Activated CD4-positive, alpha-beta T cell treated with anti-CD3 and anti-CD28 coated beads, Interleukin-2, amount 10 ng/mL, durations not matched to agents 24 days and 14 days (primary cell): ENCODE measurements at regions of chr1 and their contacts with region 1.

Region 1: DNA sequence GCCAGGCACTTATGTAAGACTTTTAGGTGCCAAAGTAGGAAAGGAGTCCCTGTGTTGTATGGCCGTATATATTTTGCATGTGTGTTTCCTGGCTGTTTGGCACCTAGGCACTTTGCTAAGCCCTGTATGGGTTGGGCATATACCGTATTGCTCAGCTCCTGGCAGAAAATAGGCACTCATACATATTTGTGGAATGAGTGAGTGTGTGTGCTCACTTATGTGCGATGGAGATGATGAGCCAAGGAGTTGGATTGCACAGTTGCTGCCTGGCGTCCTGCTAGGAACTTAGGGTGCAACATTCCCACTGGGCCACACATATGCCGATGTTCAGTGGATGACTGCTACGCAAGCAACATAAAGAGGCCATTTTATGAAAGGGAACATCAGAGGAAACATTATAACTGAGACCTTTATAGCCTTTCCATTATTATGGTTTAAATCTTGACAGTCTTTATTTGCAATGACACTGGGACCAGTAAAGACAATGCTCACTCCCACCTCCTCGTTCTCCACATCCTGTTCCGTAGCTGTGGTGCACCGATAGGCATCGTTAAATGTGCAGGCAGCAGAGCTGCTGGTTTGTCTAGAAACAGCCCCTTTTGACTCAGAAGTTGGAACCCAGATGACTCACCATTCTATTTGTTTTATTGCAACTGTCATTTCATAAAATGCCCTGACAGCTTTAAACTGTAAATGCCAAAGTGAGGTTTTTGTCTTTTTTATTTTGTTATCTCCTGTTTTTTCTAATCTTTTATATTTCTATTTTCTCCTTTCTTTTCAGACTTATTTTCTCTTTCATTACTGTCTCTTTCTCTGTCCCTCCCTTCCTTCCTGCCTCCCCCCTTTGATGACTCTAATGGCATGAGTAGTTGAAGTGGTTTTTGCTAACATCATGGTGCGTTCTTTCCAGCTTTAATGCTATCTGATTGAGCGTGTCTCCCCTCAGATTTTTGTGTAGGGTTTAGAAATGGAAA is 36.1 kb downstream of the PEX14 start:
- DNase-seq: peak; percentile 93
- H3K4me3 Mint-ChIP-seq: peak overlapping the region; percentile 59
- H3K27ac Mint-ChIP-seq: peak overlapping the region; percentile 87
- H3K4me1 Mint-ChIP-seq: peaks cover 59% of the 10 kb centered on the region
- H3K27me3 Mint-ChIP-seq: no peaks in the 10 kb centered on the region

Region 2: GRCh38 chr1:10635085-10635896 is 124.5 kb after region 1 on chr1:
- intact Hi-C with region 1: loop called (anchors 10 kb)
- DNase-seq: no peak
- H3K4me3 Mint-ChIP-seq: no peak overlapping the region
- H3K27ac Mint-ChIP-seq: no peak overlapping the region
- H3K4me1 Mint-ChIP-seq: no peaks in the 10 kb centered on the region
- H3K27me3 Mint-ChIP-seq: peaks cover 8% of the 10 kb centered on the region

Region 3: GRCh38 chr1:10694633-10695627 is 184.1 kb after region 1 on chr1:
- intact Hi-C with region 1: loop called (anchors 1 kb)
- DNase-seq: peak; percentile 93
- H3K4me3 Mint-ChIP-seq: peak overlapping the region; percentile 84
- H3K27ac Mint-ChIP-seq: peak overlapping the region; percentile 77
- H3K4me1 Mint-ChIP-seq: peaks cover 26% of the 10 kb centered on the region
- H3K27me3 Mint-ChIP-seq: peaks cover 23% of the 10 kb centered on the region

Region 4: DNA sequence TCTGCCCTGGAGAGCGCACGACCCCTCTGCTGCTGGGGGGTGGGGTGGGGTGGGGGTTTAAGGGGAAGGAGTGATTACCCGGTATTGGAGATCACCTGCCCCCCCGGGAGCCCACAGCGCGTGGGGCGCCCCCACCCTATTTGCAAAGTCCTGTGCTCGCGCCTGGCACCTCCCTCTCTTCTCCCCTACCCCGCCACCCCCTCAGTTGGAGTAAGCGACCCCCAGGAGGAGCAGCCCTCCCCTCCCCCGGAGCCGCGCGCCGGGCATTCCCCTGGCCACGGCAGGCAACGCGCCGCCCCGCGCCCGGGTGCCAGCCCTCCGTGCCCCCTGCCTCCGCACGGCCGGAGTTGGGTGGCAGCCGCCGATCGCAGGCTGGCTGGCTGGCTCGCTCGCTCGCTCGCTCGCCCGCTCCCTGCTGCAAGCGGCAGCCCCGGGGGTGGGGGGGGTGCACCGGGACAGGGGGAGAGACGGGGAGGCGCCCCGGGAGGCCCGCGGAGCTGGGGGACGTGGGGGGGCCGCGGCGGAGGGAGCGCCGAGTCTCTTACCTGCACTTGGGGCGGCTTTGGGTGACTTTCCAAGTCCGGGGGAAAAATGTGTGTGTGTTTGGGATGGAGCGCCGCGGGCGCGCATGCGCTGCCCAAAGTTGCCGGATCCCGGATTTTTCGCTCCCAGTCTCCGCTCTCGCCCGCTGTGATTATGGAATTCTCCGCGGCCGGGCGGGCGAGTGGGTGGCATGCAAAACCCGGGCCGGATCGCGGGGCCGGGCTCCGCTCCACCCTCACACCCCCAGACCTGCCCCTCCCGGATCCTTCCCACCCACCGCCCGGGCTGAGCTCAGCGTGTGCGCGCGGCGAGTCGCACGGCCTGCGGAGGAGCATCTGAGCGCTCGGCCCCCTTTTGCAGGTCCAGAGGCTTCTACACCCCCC is 285.5 kb after region 1 on chr1 and contains the start of gene CASZ1:
- intact Hi-C with region 1: loop called (anchors 10 kb)
- DNase-seq: no peak
- H3K4me3 Mint-ChIP-seq: peak within 1 kb of the TSS; percentile 85
- H3K27ac Mint-ChIP-seq: no peak within 1 kb of the TSS
- H3K4me1 Mint-ChIP-seq: peaks cover 8% of the 10 kb centered on the region
- H3K27me3 Mint-ChIP-seq: peaks cover 65% of the 10 kb centered on the region
- total RNA-seq, gene CASZ1: 6.9 and 7.5 TPM in 2 replicates

Region 5: DNA sequence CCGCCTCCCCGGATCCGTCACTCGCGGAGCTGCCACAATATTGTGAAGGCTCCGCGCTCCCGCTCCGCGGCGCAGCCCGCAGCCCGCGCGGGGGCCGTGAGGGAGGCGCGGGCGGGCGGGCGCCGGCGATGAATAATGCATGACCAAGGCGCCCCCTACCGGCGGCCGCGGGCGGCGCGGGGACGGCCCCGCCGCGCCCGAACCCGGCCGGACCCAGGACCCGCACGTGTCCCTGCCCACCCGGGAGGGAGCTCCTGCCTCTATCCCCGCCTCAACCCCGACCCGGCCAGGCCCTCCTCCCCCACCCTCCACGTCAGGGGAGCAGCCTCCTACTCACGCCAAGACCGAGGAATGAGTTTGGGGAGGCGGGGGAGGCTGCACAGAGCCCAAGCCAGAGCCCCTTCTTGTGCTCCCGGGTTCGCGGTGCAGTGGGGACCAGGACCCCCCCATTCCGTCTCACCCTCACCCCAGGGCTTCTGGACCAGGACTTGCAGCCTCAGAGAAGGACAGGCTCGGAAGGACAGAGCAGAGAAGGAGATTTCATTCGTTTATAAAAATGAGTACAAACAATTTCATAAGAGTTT is 356.4 kb after region 1 on chr1:
- intact Hi-C with region 1: loop called (anchors 2 kb)
- DNase-seq: peak; percentile 90
- H3K4me3 Mint-ChIP-seq: peak overlapping the region; percentile 41
- H3K27ac Mint-ChIP-seq: no peak overlapping the region
- H3K4me1 Mint-ChIP-seq: peaks cover 14% of the 10 kb centered on the region
- H3K27me3 Mint-ChIP-seq: peaks cover 65% of the 10 kb centered on the region

Region 6: GRCh38 chr1:10932088-10932487 is 421.3 kb after region 1 on chr1:
- intact Hi-C with region 1: loop called (anchors 1 kb)
- DNase-seq: peak; percentile 75
- H3K4me3 Mint-ChIP-seq: no peak overlapping the region
- H3K27ac Mint-ChIP-seq: peak overlapping the region; percentile 5
- H3K4me1 Mint-ChIP-seq: peaks cover 5% of the 10 kb centered on the region
- H3K27me3 Mint-ChIP-seq: peaks cover 22% of the 10 kb centered on the region

Region 7: GRCh38 chr1:10941891-10942541 is 431.2 kb after region 1 on chr1:
- intact Hi-C with region 1: loop called (anchors 1 kb)
- DNase-seq: peak; percentile 90
- H3K4me3 Mint-ChIP-seq: no peak overlapping the region
- H3K27ac Mint-ChIP-seq: no peak overlapping the region
- H3K4me1 Mint-ChIP-seq: peaks cover 29% of the 10 kb centered on the region
- H3K27me3 Mint-ChIP-seq: peaks cover 59% of the 10 kb centered on the region